Motor neuron (in vitro differentiated cells): ENCODE measurements at regions of chr1 and their contacts with region 1.

Region 1: GRCh38 chr1:71049951-71050598 is 2.5 kb upstream of the PTGER3 start:
- ATAC-seq: peak; percentile 21 to 59 (median 38)
- H3K4me3 ChIP-seq: no peak overlapping the region
- H3K27ac ChIP-seq: no peak overlapping the region
- H3K4me1 ChIP-seq: peaks cover 0 to 6% of the 10 kb centered on the region in 2 donors

Region 2: GRCh38 chr1:70227439-70227838 is 822.6 kb before region 1 on chr1:
- in situ Hi-C with region 1: loop called in 1 of 9 experiments (anchors 25 kb)
- ATAC-seq: peak in 4 of 8 experiments; percentile 13 to 50 (median 25)
- H3K4me3 ChIP-seq: no peak overlapping the region
- H3K27ac ChIP-seq: no peak overlapping the region
- H3K4me1 ChIP-seq: peaks cover 14 to 26% of the 10 kb centered on the region in 2 donors

Region 3: GRCh38 chr1:70290218-70290617 is 759.9 kb before region 1 on chr1:
- in situ Hi-C with region 1: loop called in 1 of 9 experiments (anchors 25 kb)
- ATAC-seq: no peak
- H3K4me3 ChIP-seq: no peak overlapping the region
- H3K27ac ChIP-seq: no peak overlapping the region
- H3K4me1 ChIP-seq: no peaks in the 10 kb centered on the region

Region 4: GRCh38 chr1:70528590-70529333 is 521.3 kb before region 1 on chr1:
- in situ Hi-C with region 1: loop called in 6 of 9 experiments (anchors 10 to 25 kb)
- ATAC-seq: peak; percentile 43 to 99 (median 74)
- H3K4me3 ChIP-seq: no peak overlapping the region
- H3K27ac ChIP-seq: no peak overlapping the region
- H3K4me1 ChIP-seq: no peaks in the 10 kb centered on the region

Region 5: DNA sequence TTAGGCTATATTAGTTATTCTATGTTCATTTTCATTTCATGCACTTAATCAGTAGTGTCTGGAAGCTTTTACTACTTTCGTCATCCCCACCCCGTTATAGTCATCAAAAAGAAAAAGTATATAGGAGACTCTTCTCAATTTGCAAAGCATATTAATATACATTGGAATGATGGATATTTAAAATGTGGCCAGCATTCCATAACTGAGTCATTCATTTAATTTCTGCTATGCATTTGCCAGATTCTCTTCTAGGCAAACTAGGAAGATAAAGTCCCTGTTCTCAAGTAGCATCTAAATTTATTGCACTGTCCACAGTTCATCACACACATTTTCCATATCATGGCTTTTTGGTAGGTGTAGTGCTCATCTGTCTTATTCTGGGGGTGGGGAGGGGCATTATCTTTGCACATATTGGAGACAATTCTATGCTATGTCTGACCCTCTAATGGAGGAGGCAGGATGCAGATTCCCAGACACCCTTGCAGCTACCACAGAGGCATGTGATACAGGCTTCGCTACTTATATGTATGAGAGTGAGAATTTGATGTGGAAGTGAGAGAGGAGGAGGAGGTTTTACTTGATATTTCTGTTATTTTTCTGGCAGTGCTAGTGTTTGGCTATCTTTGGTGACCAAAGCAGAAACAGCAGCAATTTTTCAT is 513.2 kb before region 1 on chr1:
- in situ Hi-C with region 1: loop called in 4 of 9 experiments (anchors 10 to 25 kb)
- ATAC-seq: peak in 4 of 8 experiments; percentile 60 to 98 (median 71)
- H3K4me3 ChIP-seq: no peak overlapping the region
- H3K27ac ChIP-seq: no peak overlapping the region
- H3K4me1 ChIP-seq: peaks cover 0 to 4% of the 10 kb centered on the region in 2 donors

Region 6: DNA sequence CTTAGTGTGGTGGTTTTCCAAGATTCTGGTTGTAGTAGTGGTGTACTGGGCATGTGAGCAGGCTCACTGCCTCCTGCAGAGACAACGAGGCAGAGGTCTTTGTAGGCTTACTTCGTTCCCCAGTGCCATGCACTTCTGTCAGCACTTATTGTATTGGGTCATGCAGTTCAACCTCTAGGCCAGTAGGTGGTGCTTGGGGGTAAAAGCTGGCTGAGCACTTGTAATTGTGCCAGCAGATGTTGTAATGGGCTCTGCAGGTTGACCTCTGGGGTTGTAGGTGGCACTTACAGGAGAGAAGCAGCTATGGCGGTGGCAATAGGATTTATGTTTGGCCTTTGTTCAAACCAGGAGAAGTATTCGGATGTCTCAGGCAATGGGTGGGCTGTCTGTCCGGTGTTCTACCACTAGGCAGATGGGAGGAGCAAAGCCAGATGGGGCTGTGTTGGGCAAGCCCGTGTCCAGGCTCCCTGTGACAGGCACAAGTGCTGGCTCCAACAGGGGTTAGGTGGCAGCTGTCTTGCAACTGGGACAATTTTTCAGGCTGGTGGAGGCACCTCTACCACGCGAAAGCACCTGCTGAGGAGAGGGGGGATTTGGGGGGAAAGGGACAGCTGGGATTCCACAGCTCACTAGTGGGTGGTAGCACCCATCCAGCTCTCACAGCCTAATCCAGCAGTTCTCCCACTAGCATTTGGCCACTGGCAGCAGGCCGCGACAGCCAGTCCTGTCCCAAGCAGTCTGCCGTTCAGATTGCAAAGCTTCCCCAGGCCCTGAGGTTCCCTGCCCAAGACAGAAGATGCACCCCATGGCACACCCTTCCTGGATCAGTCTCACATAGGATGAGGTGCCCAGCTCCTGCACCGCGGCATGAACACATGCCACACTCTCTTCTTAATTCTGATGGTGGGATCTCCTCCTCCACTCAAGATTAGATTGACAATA is 364.5 kb before region 1 on chr1:
- in situ Hi-C with region 1: loop called in 2 of 9 experiments (anchors 25 kb)
- ATAC-seq: peak in 5 of 8 experiments; percentile 15 to 87 (median 79)
- H3K4me3 ChIP-seq: no peak overlapping the region
- H3K27ac ChIP-seq: no peak overlapping the region
- H3K4me1 ChIP-seq: no peaks in the 10 kb centered on the region

Region 7: DNA sequence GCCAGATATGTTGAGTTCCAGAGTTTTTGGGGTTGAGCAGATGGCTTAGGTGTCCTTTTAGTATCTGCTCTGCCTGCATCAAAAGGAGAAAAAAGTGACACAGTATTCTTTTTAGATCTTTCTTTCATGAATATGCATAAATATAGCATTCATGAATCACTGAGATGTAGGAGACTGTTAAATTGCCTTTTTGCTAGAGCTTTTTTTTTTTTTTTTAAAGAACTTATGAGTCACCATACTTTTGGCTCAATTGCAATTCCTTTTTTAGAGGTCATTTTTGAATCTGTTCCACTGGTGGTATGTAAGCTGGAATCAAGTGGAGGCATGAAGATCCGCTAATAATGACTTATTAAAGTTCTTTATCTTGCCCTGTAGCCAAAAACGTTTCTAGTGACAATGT is 511.7 kb after region 1 on chr1:
- in situ Hi-C with region 1: no loop called
- ATAC-seq: peak in 4 of 8 experiments; percentile 19 to 82 (median 42)
- H3K4me3 ChIP-seq: no peak overlapping the region
- H3K27ac ChIP-seq: no peak overlapping the region
- H3K4me1 ChIP-seq: no peaks in the 10 kb centered on the region